HEK293 (cell line): ENCODE measurements at regions of chr18 and their contacts with region 1.

Region 1: GRCh38 chr18:8696749-8697211 is 8.6 kb upstream of the MTCL1 start:
- H3K4me3 ChIP-seq: no peak overlapping the region
- H3K27ac ChIP-seq: no peak overlapping the region
- H3K4me1 ChIP-seq: peaks cover 3% of the 10 kb centered on the region
- CTCF ChIP-seq: 0 out of 2 replicates have a peak, but pooled peaks have one; percentile 32

Region 2: DNA sequence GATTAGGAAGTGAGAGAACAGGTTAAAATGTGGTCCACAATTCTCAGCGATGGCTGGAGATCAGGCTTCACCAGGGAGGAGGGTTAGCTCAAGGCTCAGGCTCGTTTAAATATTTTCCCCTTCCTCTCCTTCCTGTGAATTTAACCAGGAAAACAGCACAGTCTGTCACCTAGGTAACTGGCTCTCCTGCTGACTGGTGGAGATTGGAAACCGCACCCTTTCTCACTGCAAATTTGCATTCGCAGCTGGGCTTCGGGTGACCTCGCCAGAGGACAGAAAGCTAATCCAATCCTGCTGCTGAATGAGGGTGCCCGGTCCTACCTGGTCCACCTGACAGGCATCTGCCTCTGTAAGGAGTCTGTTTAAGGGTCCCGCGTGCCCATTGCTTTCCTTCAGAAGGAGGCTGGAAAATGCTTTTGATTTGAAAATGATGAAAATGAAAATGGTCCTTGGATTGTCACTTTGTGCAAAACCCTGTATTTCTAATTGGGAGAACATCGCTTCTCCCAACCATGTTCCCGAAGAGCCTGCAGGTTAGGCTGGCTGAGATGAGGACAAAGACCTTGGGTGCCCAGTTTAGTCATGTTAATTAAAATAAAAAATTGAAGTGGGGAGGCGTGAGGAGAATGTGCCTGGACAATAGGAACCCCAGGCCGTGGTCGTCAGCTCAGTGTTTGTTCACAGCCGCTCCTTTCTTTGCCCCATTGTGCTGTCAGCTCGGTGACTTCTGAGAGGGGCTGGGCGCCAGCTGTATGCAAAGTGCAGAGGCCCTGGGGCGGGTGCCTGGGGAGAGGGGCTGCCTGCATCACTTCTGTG is 34.8 kb before region 1 on chr18:
- CTCF ChIA-PET with region 1: interaction called, 14 read pairs
- POLR2A ChIA-PET with region 1: no interaction called
- H3K4me3 ChIP-seq: no peak overlapping the region
- H3K27ac ChIP-seq: no peak overlapping the region
- H3K4me1 ChIP-seq: peaks cover 3% of the 10 kb centered on the region; the same call in 1 of the 2 replicates
- CTCF ChIP-seq: no peak

Region 3: DNA sequence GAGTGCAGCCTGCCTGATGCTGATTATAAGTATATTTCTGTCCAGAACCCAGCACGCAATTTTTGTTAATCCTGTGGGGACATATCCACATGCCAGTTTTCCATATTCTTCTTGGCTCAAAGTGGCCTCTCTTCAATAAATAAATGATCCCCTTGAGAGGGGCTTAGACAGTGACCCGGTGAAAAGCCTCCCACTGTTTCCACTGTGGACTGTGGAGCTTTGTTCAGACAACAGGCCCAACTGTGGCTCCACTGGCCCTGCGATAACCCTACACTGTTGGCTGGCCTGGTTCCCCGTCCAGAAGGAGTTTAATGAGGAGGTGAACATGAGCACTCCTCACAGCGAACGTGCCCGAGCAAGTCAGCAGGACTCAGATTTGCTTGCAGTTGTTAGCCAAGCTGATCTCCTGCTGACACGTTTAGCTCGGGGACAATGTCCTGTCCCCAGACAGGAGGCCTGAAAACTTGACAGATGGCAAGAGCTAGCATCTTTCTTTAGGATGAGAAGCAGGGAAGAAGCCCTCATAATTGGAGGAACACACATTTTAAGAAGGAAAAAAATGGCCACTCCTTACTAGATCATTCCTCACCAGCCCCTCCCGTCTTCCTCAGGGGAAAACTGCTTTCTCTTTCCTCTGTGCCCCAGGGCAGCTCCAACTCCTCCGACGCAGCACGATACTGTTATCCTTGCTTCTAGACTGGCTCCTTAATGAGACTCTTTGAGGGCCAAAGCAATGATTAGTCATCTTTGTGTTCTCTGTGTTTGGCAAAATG is 11.5 kb before region 1 on chr18:
- CTCF ChIA-PET with region 1: interaction called, 30 read pairs
- POLR2A ChIA-PET with region 1: no interaction called
- H3K4me3 ChIP-seq: no peak overlapping the region
- H3K27ac ChIP-seq: no peak overlapping the region
- H3K4me1 ChIP-seq: no peaks in the 10 kb centered on the region
- CTCF ChIP-seq: no peak

Region 4: DNA sequence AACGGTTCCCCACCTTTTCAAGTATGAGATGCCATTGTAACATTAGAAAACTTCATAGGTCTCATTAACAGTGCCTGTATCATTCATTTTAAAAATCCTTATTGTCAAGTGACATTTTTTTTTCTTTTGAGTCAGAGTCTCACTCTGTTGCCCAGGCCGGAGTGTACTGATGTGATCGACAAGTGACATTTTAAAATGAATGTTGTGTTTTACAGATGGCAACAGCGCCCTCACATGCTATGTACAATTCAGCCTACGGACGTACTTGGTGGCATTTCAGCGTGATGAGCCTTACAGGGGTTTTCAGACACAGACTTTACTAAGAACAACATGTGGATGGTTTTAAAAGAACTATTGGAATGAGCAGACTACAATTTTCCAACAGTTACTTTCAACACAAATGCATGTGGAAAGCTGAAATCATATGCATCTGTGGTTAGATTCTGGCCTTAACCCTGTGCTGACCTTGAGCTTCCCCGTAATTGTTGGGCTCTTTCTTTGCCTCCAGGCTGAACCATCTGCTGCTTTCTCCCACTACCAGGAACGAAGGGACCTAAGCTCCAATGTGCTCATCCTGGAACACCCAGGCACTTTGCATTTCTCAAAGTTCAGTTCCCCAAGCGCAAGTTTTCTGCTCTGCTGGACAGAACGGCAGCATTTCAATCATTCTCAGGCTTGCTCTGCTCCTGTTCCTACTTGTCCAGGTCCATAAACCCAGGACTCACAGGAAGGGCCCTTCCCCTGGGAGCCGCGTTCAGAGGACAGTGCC is 285.8 kb after region 1 on chr18:
- CTCF ChIA-PET with region 1: interaction called, 49 read pairs
- POLR2A ChIA-PET with region 1: no interaction called
- H3K4me3 ChIP-seq: no peak overlapping the region
- H3K27ac ChIP-seq: no peak overlapping the region
- H3K4me1 ChIP-seq: no peaks in the 10 kb centered on the region
- CTCF ChIP-seq: no peak; the same call in 1 of the 2 replicates

Region 5: GRCh38 chr18:8998481-8999217 is 301.9 kb after region 1 on chr18:
- CTCF ChIA-PET with region 1: no interaction called
- POLR2A ChIA-PET with region 1: no interaction called
- H3K4me3 ChIP-seq: no peak overlapping the region
- H3K27ac ChIP-seq: no peak overlapping the region
- H3K4me1 ChIP-seq: peaks cover 4% of the 10 kb centered on the region; the same call in 1 of the 2 replicates
- CTCF ChIP-seq: no peak

Region 6: DNA sequence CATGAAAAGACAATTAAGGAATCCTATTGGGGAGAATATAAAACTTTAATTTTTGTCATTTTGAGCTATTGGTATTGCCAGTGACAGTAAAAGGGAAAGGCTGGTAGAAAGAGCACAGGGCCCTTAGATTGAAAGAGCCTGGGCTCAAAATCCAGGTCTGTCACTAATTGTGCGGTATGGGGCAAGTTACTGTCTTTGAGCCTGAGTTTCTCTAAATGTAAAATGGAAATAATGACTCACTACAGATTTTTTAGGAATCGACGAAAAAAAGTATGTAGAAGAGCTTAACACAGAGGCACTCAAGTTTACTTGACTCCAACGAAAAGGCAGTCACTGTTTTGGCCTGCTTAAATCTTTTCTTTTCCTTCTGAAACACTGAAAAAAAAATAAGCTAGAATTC is 412.7 kb after region 1 on chr18:
- CTCF ChIA-PET with region 1: no interaction called
- POLR2A ChIA-PET with region 1: no interaction called
- H3K4me3 ChIP-seq: no peak overlapping the region
- H3K27ac ChIP-seq: no peak overlapping the region
- H3K4me1 ChIP-seq: peaks cover 35% of the 10 kb centered on the region; the same call in 1 of the 2 replicates
- CTCF ChIP-seq: no peak